Activated T-helper 2 cell treated with anti-CD3 and anti-CD28 coated beads, Interferon-gamma antibody, Interleukin-2, Interleukin-4, amounts not matched to agents 10 μg/mL and 5 μg/mL and 100 μg/mL, durations not matched to agents 14 hours and 24 hours and 36 hours (primary cell): ENCODE measurements at regions of chr9 and their contacts with region 1.

Region 1: DNA sequence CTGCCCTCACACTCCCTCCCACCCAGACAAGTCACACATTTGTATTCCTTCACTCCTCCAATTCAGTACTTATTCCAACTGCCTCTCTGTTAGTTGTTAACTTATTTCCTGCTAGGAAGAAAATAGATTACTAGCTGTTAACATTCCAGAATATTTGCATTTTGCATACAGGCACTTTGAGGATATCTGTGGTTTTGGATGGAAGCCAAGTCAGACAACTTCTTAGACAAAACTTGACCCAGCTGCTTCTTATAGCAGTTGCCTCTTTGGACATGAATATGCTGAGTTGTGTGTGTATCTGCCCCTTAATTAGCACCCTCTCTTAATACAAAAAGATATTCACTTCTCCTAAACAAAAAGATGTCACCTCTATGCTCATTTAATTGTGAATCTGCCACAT is 1280.6 kb upstream of the ACO1 start:
- DNase-seq: no peak
- H3K4me3 Mint-ChIP-seq: no peak overlapping the region
- H3K27ac Mint-ChIP-seq: no peak overlapping the region
- H3K4me1 Mint-ChIP-seq: no peaks in the 10 kb centered on the region
- H3K27me3 Mint-ChIP-seq: peaks cover 1% of the 10 kb centered on the region

Region 2: GRCh38 chr9:30688801-30689200 is 415.0 kb before region 1 on chr9:
- intact Hi-C with region 1: no loop called
- DNase-seq: no peak
- H3K4me3 Mint-ChIP-seq: no peak overlapping the region
- H3K27ac Mint-ChIP-seq: no peak overlapping the region
- H3K4me1 Mint-ChIP-seq: no peaks in the 10 kb centered on the region
- H3K27me3 Mint-ChIP-seq: no peaks in the 10 kb centered on the region

Region 3: GRCh38 chr9:32092031-32092430 is 988.2 kb after region 1 on chr9:
- intact Hi-C with region 1: loop called (anchors 10 kb)
- DNase-seq: no peak
- H3K4me3 Mint-ChIP-seq: no peak overlapping the region
- H3K27ac Mint-ChIP-seq: no peak overlapping the region
- H3K4me1 Mint-ChIP-seq: no peaks in the 10 kb centered on the region
- H3K27me3 Mint-ChIP-seq: no peaks in the 10 kb centered on the region